CD4-positive, alpha-beta memory T cell (primary cell): ENCODE measurements at regions of chr9 and their contacts with region 1.

Region 1: DNA sequence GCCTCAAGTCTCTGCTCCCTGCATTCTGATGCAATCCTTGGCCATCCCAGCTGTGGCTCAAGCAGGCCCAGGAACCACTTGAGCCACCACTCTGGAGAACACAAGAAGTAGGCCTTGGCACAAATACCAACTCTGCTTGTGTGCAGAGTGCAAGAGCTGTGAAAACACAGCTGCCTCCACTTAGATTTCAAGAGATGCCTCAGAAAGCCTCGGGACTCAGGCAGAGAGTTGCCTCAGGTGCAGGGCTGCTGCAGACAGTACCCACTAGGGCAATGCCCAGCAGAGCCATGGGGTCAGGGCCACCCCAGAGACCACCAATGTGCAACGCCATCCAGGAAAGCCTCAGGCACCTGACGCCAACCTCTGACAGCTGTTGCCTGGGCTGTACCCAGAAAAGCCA is 82.4 kb downstream of the FREM1 start:
- DNase-seq: no peak
- H3K4me3 ChIP-seq: no peak overlapping the region
- H3K4me3 Mint-ChIP-seq: no peak overlapping the region
- H3K27ac ChIP-seq: no peak overlapping the region
- H3K27ac Mint-ChIP-seq: no peak overlapping the region
- H3K4me1 ChIP-seq: no peaks in the 10 kb centered on the region
- H3K4me1 Mint-ChIP-seq: no peaks in the 10 kb centered on the region
- H3K27me3 ChIP-seq: no peaks in the 10 kb centered on the region
- H3K27me3 Mint-ChIP-seq: peaks cover 3% of the 10 kb centered on the region in 2 donors

Region 2: DNA sequence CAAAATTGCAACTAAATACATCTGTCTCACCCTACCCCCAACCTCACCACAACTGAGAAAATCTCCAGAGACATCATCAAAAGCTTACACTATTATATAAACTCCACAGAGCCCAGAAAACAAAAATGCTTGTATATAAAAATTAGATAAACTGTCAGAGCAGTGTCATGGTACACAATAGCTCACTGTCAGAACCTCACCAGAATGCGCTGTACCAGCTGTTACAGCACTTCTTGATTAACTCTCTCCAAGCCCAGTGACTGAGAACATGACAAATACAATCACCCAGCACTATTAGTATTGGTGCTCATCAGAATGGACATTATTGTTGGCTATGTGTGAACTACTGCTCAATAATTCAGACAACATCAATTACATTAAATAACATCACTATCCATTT is 200.3 kb before region 1 on chr9:
- CTCF ChIA-PET with region 1: no interaction called
- POLR2A ChIA-PET with region 1: no interaction called
- intact Hi-C with region 1: loop called (anchors 10 kb)
- DNase-seq: no peak
- H3K4me3 ChIP-seq: no peak overlapping the region
- H3K4me3 Mint-ChIP-seq: no peak overlapping the region
- H3K27ac ChIP-seq: no peak overlapping the region
- H3K27ac Mint-ChIP-seq: no peak overlapping the region
- H3K4me1 ChIP-seq: no peaks in the 10 kb centered on the region
- H3K4me1 Mint-ChIP-seq: peaks cover 0 to 4% (median 2%) of the 10 kb centered on the region in 4 donors
- H3K27me3 ChIP-seq: no peaks in the 10 kb centered on the region
- H3K27me3 Mint-ChIP-seq: no peaks in the 10 kb centered on the region

Region 3: GRCh38 chr9:14779566-14780022 is 48.2 kb before region 1 on chr9:
- CTCF ChIA-PET with region 1: no interaction called
- POLR2A ChIA-PET with region 1: no interaction called
- intact Hi-C with region 1: no loop called
- DNase-seq: no peak
- H3K4me3 ChIP-seq: no peak overlapping the region
- H3K4me3 Mint-ChIP-seq: no peak overlapping the region
- H3K27ac ChIP-seq: no peak overlapping the region
- H3K27ac Mint-ChIP-seq: no peak overlapping the region
- H3K4me1 ChIP-seq: no peaks in the 10 kb centered on the region
- H3K4me1 Mint-ChIP-seq: no peaks in the 10 kb centered on the region
- H3K27me3 ChIP-seq: no peaks in the 10 kb centered on the region
- H3K27me3 Mint-ChIP-seq: peaks cover 4 to 5% of the 10 kb centered on the region in 2 donors

Region 4: DNA sequence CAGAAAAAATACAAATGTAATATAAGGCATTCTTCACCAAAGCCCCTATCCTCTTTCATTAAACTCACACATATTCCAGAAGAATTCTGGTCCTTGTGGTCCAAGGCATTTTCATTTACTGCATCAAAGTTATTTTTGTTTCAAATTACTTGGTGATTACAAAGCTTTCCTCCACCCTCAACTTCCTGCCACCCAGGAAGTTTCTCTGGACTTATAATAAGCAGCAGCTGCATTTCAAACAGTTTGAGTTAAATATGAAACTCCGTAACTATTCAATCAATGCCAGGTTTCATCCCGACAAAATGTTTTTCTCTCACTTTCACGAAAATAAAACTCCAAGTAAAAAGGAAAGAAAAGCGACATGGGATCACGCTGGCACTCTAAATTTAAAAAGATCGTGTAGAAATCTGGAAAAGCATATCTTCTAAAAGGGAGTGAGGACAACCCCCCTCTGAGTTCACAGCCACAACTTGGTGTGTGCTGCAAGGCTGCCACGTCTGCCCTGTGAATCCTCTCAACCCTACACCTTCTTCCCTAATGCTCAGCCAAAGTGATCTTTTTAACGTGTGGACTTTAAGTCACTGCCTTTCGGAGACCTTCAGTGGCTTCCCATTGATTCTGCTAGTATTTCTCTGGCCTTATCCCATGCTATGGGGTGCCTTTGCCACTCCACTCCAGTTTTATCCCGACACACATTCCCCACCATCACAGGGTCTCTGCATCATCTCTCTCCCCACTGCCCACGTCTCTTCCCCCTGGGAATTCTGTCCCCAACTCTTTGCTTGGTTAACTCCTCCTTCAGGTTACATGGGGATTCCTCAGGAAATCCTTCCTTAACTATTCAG is 14.2 kb before region 1 on chr9:
- CTCF ChIA-PET with region 1: no interaction called
- POLR2A ChIA-PET with region 1: no interaction called
- intact Hi-C with region 1: no loop called
- DNase-seq: no peak
- H3K4me3 ChIP-seq: no peak overlapping the region
- H3K4me3 Mint-ChIP-seq: no peak overlapping the region
- H3K27ac ChIP-seq: no peak overlapping the region
- H3K27ac Mint-ChIP-seq: no peak overlapping the region
- H3K4me1 ChIP-seq: no peaks in the 10 kb centered on the region
- H3K4me1 Mint-ChIP-seq: no peaks in the 10 kb centered on the region
- H3K27me3 ChIP-seq: no peaks in the 10 kb centered on the region
- H3K27me3 Mint-ChIP-seq: peaks cover 2 to 5% of the 10 kb centered on the region in 2 donors